IMR-90 (cell line): ENCODE measurements at regions of chr1 and their contacts with region 1.

Region 1: GRCh38 chr1:1406817-1407635 is at the start of gene MRPL20:
- DNase-seq: peak; percentile 86
- ATAC-seq: peak; percentile 94
- H3K4me3 ChIP-seq: peak within 1 kb of the TSS; percentile 90
- H3K27ac ChIP-seq: peak within 1 kb of the TSS; percentile 80
- H3K4me1 ChIP-seq: peaks cover 5% of the 10 kb centered on the region
- H3K27me3 ChIP-seq: no peaks in the 10 kb centered on the region
- CTCF ChIP-seq: no peak
- POLR2A ChIP-seq: peak; percentile 86
- RAD21 ChIP-seq: no peak
- total RNA-seq, gene MRPL20: 141 and 149 TPM in 2 replicates

Region 2: GRCh38 chr1:1250786-1251284 is 156.2 kb before region 1 on chr1:
- CTCF ChIA-PET with region 1: no interaction called
- POLR2A ChIA-PET with region 1: no interaction called
- dilution Hi-C with region 1: no loop called
- in situ Hi-C with region 1: no loop called
- intact Hi-C with region 1: no loop called
- DNase-seq: no peak
- ATAC-seq: no peak
- H3K4me3 ChIP-seq: no peak overlapping the region
- H3K27ac ChIP-seq: peak overlapping the region; percentile 29; the same call in 1 of the 2 replicates
- H3K4me1 ChIP-seq: peaks cover 9% of the 10 kb centered on the region
- H3K27me3 ChIP-seq: no peaks in the 10 kb centered on the region
- CTCF ChIP-seq: no peak
- POLR2A ChIP-seq: no peak
- RAD21 ChIP-seq: no peak

Region 3: GRCh38 chr1:1427106-1427819 is 20.2 kb after region 1 on chr1:
- CTCF ChIA-PET with region 1: no interaction called
- POLR2A ChIA-PET with region 1: no interaction called
- dilution Hi-C with region 1: no loop called
- in situ Hi-C with region 1: no loop called
- intact Hi-C with region 1: no loop called
- DNase-seq: no peak
- ATAC-seq: peak; percentile 22
- H3K4me3 ChIP-seq: peak overlapping the region; percentile 58
- H3K27ac ChIP-seq: no peak overlapping the region; the same call in 1 of the 2 replicates
- H3K4me1 ChIP-seq: peaks cover 19% of the 10 kb centered on the region
- H3K27me3 ChIP-seq: no peaks in the 10 kb centered on the region
- CTCF ChIP-seq: no peak
- POLR2A ChIP-seq: no peak
- RAD21 ChIP-seq: no peak

Region 4: DNA sequence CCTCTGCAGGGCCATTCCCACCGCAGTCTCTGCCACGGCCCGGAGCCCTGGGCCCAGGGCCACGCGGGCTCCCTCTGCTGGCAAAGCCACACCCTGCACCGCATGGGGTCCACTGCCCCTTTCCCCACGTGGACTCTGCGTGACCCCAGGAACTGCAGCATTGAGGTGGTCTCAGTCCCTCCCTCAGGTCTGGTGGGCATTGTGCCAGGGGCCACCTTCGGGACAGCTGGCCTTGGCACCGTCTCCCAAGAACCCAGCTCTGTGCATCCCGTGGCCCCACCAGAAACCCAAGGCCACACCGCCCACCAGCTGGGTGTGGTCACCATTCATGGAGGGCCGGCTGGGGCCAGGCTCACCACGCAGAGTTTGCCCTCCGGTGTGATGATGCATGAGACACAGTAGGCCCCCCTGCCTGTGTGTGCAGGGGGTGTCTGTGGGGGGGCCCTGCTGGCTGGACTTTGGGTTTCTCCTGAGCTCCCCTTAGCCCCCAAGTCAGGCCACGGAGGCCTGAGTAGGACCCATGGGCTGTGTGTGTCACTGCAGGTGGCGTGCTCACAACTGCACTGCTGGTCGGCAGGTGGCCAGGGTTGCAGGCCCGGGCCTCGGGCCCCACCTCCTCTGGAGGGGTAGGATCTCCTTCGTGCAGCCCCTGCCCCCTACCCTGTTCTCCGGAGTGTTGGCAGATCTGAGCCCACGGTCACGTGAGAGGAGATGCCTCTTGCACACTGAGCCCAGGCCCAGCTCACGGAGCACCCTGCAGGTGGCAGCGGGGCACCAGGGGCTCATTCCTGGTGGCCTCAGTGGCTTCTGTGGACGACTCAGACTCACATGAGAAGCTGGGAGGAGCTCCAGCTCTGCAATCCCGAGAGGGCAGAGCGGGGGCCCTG is 34.2 kb after region 1 on chr1:
- CTCF ChIA-PET with region 1: interaction called, 3 read pairs
- POLR2A ChIA-PET with region 1: no interaction called
- dilution Hi-C with region 1: no loop called
- in situ Hi-C with region 1: no loop called
- intact Hi-C with region 1: loop called (anchors 5 kb)
- DNase-seq: no peak
- ATAC-seq: peak; percentile 96
- H3K4me3 ChIP-seq: no peak overlapping the region
- H3K27ac ChIP-seq: no peak overlapping the region
- H3K4me1 ChIP-seq: no peaks in the 10 kb centered on the region
- H3K27me3 ChIP-seq: peaks cover 2% of the 10 kb centered on the region; the same call in 1 of the 2 replicates
- CTCF ChIP-seq: peak; percentile 75
- POLR2A ChIP-seq: 0 out of 2 replicates have a peak, but pooled peaks have one; percentile 19
- RAD21 ChIP-seq: peak; percentile 77